Naive thymus-derived CD4-positive, alpha-beta T cell (primary cell): ENCODE measurements at regions of chr12 and their contacts with region 1.

Region 1: DNA sequence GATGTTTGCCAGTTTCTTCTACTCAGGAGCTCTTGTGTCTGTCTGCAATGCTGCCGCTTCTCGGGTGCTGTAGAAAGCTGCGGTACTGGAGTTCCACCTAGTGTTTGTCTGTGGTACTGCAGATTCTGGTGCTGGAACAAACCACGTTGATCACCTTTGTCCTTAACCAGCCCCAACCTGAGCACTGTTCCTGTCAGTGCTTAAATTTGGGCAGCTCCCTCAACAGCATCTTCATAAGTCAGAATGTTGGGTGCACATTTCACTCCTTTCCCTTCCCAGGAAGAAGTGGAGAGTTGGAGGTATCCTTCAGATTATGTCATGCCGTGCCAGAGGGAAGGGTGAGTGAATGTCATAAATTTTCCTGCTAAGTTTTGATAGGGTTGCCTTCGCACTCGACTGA is 48.7 kb upstream of the LALBA start:
- DNase-seq: peak; percentile 27 to 82 (median 75)
- ATAC-seq: peak; percentile 97
- H3K4me3 ChIP-seq: no peak overlapping the region
- H3K4me3 Mint-ChIP-seq: no peak overlapping the region
- H3K27ac ChIP-seq: no peak overlapping the region
- H3K27ac Mint-ChIP-seq: no peak overlapping the region
- H3K4me1 ChIP-seq: no peaks in the 10 kb centered on the region
- H3K4me1 Mint-ChIP-seq: peaks cover 0 to 5% (median 0%) of the 10 kb centered on the region in 7 donors
- H3K27me3 ChIP-seq: no peaks in the 10 kb centered on the region
- H3K27me3 Mint-ChIP-seq: peaks cover 24 to 44% (median 29%) of the 10 kb centered on the region in 5 donors

Region 2: GRCh38 chr12:47941851-47942601 is 676.5 kb before region 1 on chr12:
- CTCF ChIA-PET with region 1: interaction called, 3 read pairs
- POLR2A ChIA-PET with region 1: no interaction called
- intact Hi-C with region 1: loop called in 1 of 2 experiments (anchors 5 kb)
- DNase-seq: peak in 7 of 9 donors; percentile 24 to 55 (median 45)
- ATAC-seq: peak; percentile 14
- H3K4me3 ChIP-seq: no peak overlapping the region
- H3K4me3 Mint-ChIP-seq: no peak overlapping the region
- H3K27ac ChIP-seq: no peak overlapping the region
- H3K27ac Mint-ChIP-seq: no peak overlapping the region
- H3K4me1 ChIP-seq: no peaks in the 10 kb centered on the region
- H3K4me1 Mint-ChIP-seq: peaks cover 0 to 12% (median 7%) of the 10 kb centered on the region in 7 donors
- H3K27me3 ChIP-seq: no peaks in the 10 kb centered on the region
- H3K27me3 Mint-ChIP-seq: peaks cover 5 to 26% (median 25%) of the 10 kb centered on the region in 5 donors

Region 3: GRCh38 chr12:48084066-48084465 is 534.5 kb before region 1 on chr12:
- CTCF ChIA-PET with region 1: no interaction called
- POLR2A ChIA-PET with region 1: no interaction called
- intact Hi-C with region 1: loop called in 1 of 2 experiments (anchors 1 kb)
- DNase-seq: no peak
- ATAC-seq: no peak
- H3K4me3 ChIP-seq: no peak overlapping the region
- H3K4me3 Mint-ChIP-seq: no peak overlapping the region
- H3K27ac ChIP-seq: no peak overlapping the region
- H3K27ac Mint-ChIP-seq: no peak overlapping the region
- H3K4me1 ChIP-seq: no peaks in the 10 kb centered on the region
- H3K4me1 Mint-ChIP-seq: peaks cover 0 to 2% (median 0%) of the 10 kb centered on the region in 7 donors
- H3K27me3 ChIP-seq: no peaks in the 10 kb centered on the region
- H3K27me3 Mint-ChIP-seq: no peaks in the 10 kb centered on the region

Region 4: DNA sequence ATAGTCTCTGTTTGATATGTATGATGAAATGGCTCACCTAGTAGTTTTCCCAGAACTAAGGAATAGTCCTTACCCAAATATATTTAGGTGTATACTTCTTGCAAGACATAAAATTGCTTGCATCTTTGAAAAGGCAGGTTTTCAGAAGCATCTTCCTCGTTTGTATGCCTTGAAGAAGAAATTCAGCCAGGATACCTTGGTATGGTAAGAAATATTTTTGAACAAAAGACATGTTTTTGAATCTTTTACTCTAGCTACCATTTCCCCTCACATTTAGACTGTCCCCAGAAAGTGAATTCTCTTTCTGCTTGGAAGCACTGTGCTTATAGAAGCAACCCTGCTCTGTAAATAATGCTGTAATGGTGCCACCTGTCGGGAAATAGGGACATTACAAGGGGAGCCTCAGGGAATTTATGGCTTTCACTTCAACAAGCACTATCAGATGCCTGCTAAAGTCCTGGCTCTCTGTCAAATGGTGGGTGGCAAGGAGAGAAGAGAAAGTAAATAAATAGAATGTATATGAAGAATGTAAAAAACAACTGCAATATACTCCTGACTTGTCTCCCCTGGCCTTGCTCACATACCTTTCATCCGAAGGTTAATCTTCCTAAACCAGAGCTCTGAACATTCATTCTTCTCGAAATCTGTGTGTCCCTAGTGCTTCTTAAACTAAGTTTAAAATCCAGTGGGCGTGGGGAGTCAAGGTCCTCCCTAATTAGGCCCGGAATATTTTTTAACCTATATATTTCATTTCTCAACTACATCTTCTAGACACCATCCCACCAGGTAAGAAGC is 429.0 kb before region 1 on chr12:
- CTCF ChIA-PET with region 1: interaction called, 3 read pairs
- POLR2A ChIA-PET with region 1: no interaction called
- intact Hi-C with region 1: loop called in 1 of 2 experiments (anchors 1 kb)
- DNase-seq: peak; percentile 29 to 72 (median 62)
- ATAC-seq: peak; percentile 91
- H3K4me3 ChIP-seq: no peak overlapping the region
- H3K4me3 Mint-ChIP-seq: no peak overlapping the region
- H3K27ac ChIP-seq: no peak overlapping the region
- H3K27ac Mint-ChIP-seq: no peak overlapping the region
- H3K4me1 ChIP-seq: peaks cover 0 to under 1% of the 10 kb centered on the region in 2 donors
- H3K4me1 Mint-ChIP-seq: peaks cover 0 to 12% (median 0%) of the 10 kb centered on the region in 7 donors
- H3K27me3 ChIP-seq: no peaks in the 10 kb centered on the region
- H3K27me3 Mint-ChIP-seq: peaks cover 16 to 76% (median 22%) of the 10 kb centered on the region in 5 donors

Region 5: DNA sequence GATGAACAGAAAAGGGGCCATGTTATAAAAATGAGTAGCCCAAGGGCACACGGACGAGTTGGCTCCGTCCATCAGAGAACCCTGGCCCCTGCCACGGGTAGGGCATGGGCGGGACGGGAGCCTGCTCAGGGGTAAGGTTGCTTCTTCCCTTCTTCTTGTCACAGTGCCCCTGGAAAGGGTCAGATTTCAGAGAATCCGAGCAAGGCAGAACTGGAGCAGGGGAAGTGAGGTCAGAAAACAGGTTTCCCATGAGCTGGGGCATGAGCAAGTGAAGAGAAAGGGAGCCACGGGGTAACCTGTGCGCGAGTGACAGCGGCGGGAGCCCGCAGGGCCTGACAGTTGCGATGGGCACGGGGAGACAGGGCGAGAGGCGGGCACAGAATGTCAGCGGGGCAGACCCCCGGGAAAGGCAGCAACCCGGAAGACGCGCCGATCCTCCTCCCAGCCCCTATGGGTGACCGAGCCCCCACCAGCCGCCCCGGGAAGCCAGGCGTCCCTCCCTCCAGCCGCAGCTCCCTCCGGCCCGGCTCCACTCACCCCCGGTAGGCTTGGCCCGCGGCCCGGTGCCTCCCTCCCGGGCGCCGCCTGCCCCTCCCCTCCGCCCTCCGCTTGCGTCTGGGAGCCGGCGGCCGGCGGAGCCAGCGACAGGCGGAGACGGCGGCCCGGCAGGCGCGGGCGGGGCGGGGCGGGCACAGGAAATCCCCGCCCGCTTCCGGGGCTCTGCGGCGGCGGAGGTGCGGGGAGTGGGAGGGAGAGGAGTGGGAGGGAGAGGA is 268.1 kb before region 1 on chr12 and contains the start of gene ZNF641:
- CTCF ChIA-PET with region 1: no interaction called
- POLR2A ChIA-PET with region 1: no interaction called
- intact Hi-C with region 1: loop called in 1 of 2 experiments (anchors 2 kb)
- DNase-seq: peak; percentile 74 to 85 (median 84)
- ATAC-seq: peak; percentile 95
- H3K4me3 ChIP-seq: peak within 1 kb of the TSS; percentile 77
- H3K4me3 Mint-ChIP-seq: peak within 1 kb of the TSS; percentile 91 to 99 (median 96)
- H3K27ac ChIP-seq: peak within 1 kb of the TSS; percentile 92
- H3K27ac Mint-ChIP-seq: peak within 1 kb of the TSS; percentile 89 to 99 (median 96)
- H3K4me1 ChIP-seq: peaks cover 14 to 25% of the 10 kb centered on the region in 2 donors
- H3K4me1 Mint-ChIP-seq: peaks cover 25 to 61% (median 49%) of the 10 kb centered on the region in 7 donors
- H3K27me3 ChIP-seq: peaks cover 0 to 5% of the 10 kb centered on the region in 2 donors
- H3K27me3 Mint-ChIP-seq: peaks cover 0 to 12% (median 0%) of the 10 kb centered on the region in 5 donors
- total RNA-seq, gene ZNF641: 22.1 to 50.3 (median 30.1) TPM